A673 (cell line): ENCODE measurements at regions of chr15 and their contacts with region 1.

Region 1: GRCh38 chr15:42137431-42138261 is 18.8 kb downstream of the PLA2G4F start:
- DNase-seq: peak; percentile 77
- H3K4me3 ChIP-seq: no peak overlapping the region
- H3K27ac ChIP-seq: no peak overlapping the region
- H3K4me1 ChIP-seq: no peaks in the 10 kb centered on the region
- H3K27me3 ChIP-seq: no peaks in the 10 kb centered on the region
- CTCF ChIP-seq: peak; percentile 77

Region 2: DNA sequence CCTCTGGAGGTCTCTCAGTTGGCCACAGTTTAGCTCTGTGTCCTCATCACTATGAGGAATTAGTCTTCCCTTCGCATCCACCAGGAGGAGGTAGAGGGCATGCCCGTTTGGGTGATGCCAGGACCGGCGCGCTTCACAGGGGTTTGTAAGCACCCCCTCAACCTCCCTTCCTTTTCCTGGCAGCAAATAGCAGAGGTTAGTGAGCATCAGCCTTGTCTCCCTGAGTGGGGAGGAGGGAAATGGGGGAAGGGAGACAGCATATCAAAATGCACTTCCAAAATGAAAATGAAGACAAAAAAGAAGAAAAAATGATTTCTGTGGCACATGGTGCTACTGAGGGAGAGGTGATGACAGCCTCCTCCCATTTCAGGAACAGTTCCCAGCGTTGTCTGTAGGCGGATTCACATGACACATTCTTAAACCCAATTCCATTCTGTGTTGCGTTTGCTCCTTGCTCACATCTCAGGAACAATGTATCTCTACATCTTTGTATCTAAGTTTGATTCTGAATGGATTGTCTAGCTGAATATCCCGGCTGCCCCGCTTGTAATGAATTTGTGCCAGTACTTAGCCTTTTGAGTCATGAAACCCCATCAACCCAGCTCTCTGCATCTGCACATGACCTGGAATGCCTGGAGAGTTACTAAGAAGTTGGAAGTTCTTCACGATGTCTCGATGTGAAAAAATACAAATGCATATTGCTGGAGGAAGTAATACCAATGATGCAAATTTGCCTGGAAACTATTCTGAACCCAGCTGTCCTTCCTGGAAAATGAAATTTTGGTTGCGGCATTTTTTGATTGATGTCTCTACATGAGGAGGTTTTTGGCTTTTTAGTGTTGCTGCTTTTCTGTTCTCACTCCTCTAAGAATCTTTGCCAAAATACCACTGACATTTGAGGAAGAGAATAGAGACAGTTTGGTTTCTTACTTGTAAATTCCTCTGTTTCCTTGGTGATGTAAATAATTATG is 533.4 kb before region 1 on chr15:
- CTCF ChIA-PET with region 1: no interaction called
- POLR2A ChIA-PET with region 1: no interaction called
- intact Hi-C with region 1: no loop called
- DNase-seq: peak; percentile 82
- H3K4me3 ChIP-seq: no peak overlapping the region
- H3K27ac ChIP-seq: no peak overlapping the region
- H3K4me1 ChIP-seq: peaks cover 8% of the 10 kb centered on the region
- H3K27me3 ChIP-seq: no peaks in the 10 kb centered on the region
- CTCF ChIP-seq: peak; percentile 82

Region 3: GRCh38 chr15:41746802-41747201 is 390.8 kb before region 1 on chr15:
- CTCF ChIA-PET with region 1: no interaction called
- POLR2A ChIA-PET with region 1: no interaction called
- intact Hi-C with region 1: no loop called
- DNase-seq: peak; percentile 3
- H3K4me3 ChIP-seq: no peak overlapping the region
- H3K27ac ChIP-seq: no peak overlapping the region
- H3K4me1 ChIP-seq: no peaks in the 10 kb centered on the region
- H3K27me3 ChIP-seq: no peaks in the 10 kb centered on the region
- CTCF ChIP-seq: no peak

Region 4: GRCh38 chr15:41989259-41989933 is 148.2 kb before region 1 on chr15:
- CTCF ChIA-PET with region 1: interaction called, 3 read pairs
- POLR2A ChIA-PET with region 1: no interaction called
- intact Hi-C with region 1: loop called (anchors 5 kb)
- DNase-seq: peak; percentile 79
- H3K4me3 ChIP-seq: no peak overlapping the region
- H3K27ac ChIP-seq: no peak overlapping the region
- H3K4me1 ChIP-seq: no peaks in the 10 kb centered on the region
- H3K27me3 ChIP-seq: no peaks in the 10 kb centered on the region
- CTCF ChIP-seq: peak; percentile 97

Region 5: GRCh38 chr15:42066764-42067415 is 70.8 kb before region 1 on chr15:
- CTCF ChIA-PET with region 1: interaction called, 4 read pairs
- POLR2A ChIA-PET with region 1: no interaction called
- intact Hi-C with region 1: loop called (anchors 2 kb)
- DNase-seq: no peak
- H3K4me3 ChIP-seq: no peak overlapping the region
- H3K27ac ChIP-seq: no peak overlapping the region
- H3K4me1 ChIP-seq: no peaks in the 10 kb centered on the region
- H3K27me3 ChIP-seq: no peaks in the 10 kb centered on the region
- CTCF ChIP-seq: no peak

Region 6: GRCh38 chr15:42084460-42085235 is 53.0 kb before region 1 on chr15:
- CTCF ChIA-PET with region 1: no interaction called
- POLR2A ChIA-PET with region 1: no interaction called
- intact Hi-C with region 1: loop called (anchors 5 kb)
- DNase-seq: peak; percentile 45
- H3K4me3 ChIP-seq: no peak overlapping the region
- H3K27ac ChIP-seq: no peak overlapping the region
- H3K4me1 ChIP-seq: peaks cover 4% of the 10 kb centered on the region
- H3K27me3 ChIP-seq: no peaks in the 10 kb centered on the region
- CTCF ChIP-seq: peak; percentile 95

Region 7: GRCh38 chr15:42149493-42150218 is 12.0 kb after region 1 on chr15:
- CTCF ChIA-PET with region 1: no interaction called
- POLR2A ChIA-PET with region 1: no interaction called
- intact Hi-C with region 1: no loop called
- DNase-seq: no peak
- H3K4me3 ChIP-seq: no peak overlapping the region
- H3K27ac ChIP-seq: no peak overlapping the region
- H3K4me1 ChIP-seq: no peaks in the 10 kb centered on the region
- H3K27me3 ChIP-seq: no peaks in the 10 kb centered on the region
- CTCF ChIP-seq: no peak

Region 8: GRCh38 chr15:42474827-42475226 is 337.2 kb after region 1 on chr15:
- CTCF ChIA-PET with region 1: no interaction called
- POLR2A ChIA-PET with region 1: no interaction called
- intact Hi-C with region 1: no loop called
- DNase-seq: peak; percentile 17
- H3K4me3 ChIP-seq: no peak overlapping the region
- H3K27ac ChIP-seq: no peak overlapping the region
- H3K4me1 ChIP-seq: peaks cover 6% of the 10 kb centered on the region
- H3K27me3 ChIP-seq: no peaks in the 10 kb centered on the region
- CTCF ChIP-seq: no peak